ENCODE measurements at regions of chr7 and their contacts with region 1.

Region 1: DNA sequence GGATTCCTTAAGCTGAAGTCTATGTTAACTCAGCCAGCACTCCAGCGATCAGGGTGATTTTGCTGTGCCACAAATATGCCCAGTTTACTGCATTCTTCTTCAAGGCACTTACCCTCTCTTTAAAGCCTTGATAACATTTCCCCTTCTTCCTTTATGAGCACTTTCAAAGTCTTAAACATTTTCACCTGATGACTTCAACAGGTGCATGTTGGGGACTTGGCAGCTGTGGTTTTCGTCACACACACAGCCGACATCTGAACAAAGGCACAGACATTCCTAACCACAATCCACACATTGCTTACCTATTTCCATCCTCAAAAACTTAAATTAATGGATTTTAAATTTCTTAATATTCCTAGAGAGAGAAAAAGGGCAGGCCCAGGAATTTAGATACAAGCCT is 331.5 kb downstream of the CRPPA start:
- DNase-seq: no peak
- H3K4me3 ChIP-seq: no peak overlapping the region
- CTCF ChIP-seq: no peak
- POLR2A ChIP-seq: no peak

Region 2: GRCh38 chr7:16007911-16008310 is 81.9 kb before region 1 on chr7:
- intact Hi-C with region 1: no loop called
- DNase-seq: no peak
- H3K4me3 ChIP-seq: no peak overlapping the region
- CTCF ChIP-seq: no peak
- POLR2A ChIP-seq: no peak

Region 3: GRCh38 chr7:16135658-16136057 is 45.9 kb after region 1 on chr7:
- intact Hi-C with region 1: loop called (anchors 2 kb)
- DNase-seq: no peak
- H3K4me3 ChIP-seq: no peak overlapping the region
- CTCF ChIP-seq: no peak
- POLR2A ChIP-seq: no peak

Region 4: GRCh38 chr7:16554518-16555236 is 464.9 kb after region 1 on chr7:
- intact Hi-C with region 1: no loop called
- DNase-seq: no peak
- H3K4me3 ChIP-seq: no peak overlapping the region
- CTCF ChIP-seq: no peak
- POLR2A ChIP-seq: no peak

Measured in lower leg skin (tissue), 4 donors.